Right ventricle myocardium inferior (tissue), 1 donor: ENCODE measurements at regions of chr1 and their contacts with region 1.

Region 1: GRCh38 chr1:117121776-117122697 is 488 bp upstream of the TRIM45 start:
- DNase-seq: peak; percentile 98
- ATAC-seq: peak; percentile 98

Region 2: DNA sequence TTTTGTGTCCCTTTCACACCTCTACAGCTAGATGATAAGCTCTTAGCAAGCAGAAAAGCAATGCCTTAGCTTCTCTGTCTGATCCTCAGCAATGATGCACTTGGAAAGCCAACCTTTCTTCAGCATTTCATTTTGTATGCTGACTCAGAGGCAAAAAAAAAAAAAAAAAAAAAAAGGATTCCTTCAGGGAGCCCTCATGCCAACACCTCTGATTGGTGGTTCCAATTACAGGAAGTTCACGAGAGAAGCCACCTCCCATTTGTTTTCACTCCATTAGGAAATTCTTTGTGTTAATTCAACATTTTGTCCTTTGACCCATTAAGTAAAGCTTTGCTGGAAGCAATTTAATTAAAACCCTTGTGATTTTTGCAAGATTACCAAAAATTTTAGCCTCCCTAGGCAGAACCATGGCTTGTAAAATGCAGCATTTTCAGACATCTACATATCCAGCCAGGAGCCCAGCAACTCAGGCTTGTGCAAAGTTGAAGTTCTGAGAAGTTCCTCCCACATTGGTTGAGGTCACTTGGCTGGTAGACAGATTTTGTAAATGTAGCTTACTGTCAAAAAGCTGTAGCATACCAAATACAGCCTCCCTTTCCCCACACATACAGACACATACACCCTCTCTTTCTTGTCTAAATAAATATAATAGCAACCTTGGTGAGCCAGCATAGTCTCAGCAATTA is 115.8 kb after region 1 on chr1:
- intact Hi-C with region 1: loop called (anchors 5 kb)
- DNase-seq: no peak
- ATAC-seq: no peak

Region 3: GRCh38 chr1:117284399-117285215 is 162.6 kb after region 1 on chr1:
- intact Hi-C with region 1: loop called (anchors 5 kb)
- DNase-seq: no peak
- ATAC-seq: peak; percentile 69

Region 4: DNA sequence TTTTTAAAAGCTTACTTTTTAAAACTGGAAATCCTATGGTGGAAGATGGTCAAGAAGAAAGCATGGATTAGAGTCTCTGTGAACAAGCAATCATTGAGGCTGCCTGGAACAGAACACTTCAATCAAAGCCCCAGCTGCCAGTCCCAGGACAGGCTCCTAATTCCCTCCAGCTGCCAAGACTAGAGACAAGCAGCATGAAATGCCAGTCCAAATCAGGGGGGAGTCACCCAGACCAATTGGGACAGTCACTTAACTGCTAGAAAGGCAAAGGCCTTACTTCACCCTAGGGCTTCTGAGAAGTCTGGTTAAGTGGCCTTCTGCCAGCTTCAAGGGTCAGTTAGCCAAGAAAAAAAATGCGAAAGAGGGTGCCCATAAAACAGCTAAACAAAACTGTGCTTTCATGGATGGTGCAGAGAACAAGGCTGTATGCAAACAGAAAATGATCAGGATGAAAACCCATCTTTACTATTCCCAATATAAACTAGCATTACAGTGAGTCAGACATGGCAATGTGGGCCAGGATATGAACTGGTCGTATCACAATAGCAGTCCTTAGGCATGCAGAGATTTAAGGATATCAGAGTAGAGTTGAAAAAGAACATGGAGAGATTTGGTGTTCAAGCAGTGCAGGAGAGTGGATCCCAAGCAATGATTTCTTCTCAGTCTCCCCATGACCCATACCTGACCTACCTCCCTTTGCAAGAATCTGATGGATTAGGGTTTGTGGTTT is 214.2 kb after region 1 on chr1:
- intact Hi-C with region 1: no loop called
- DNase-seq: no peak
- ATAC-seq: peak; percentile 68

Region 5: GRCh38 chr1:117367047-117368018 is 245.3 kb after region 1 on chr1 and contains the start of gene MAN1A2:
- intact Hi-C with region 1: loop called (anchors 5 kb)
- DNase-seq: peak; percentile 96
- ATAC-seq: peak; percentile 95
- total RNA-seq, gene MAN1A2: 24.6 TPM